ENCODE measurements at regions of chr10 and their contacts with region 1.

Region 1: GRCh38 chr10:124524969-124525653 is 63.5 kb downstream of the LHPP start:
- DNase-seq: no peak
- ATAC-seq: no peak
- H3K4me3 ChIP-seq: no peak overlapping the region
- H3K4me3 Mint-ChIP-seq: no peak overlapping the region
- H3K27ac ChIP-seq: no peak overlapping the region
- H3K27ac Mint-ChIP-seq: no peak overlapping the region
- H3K4me1 ChIP-seq: peaks cover 19% of the 10 kb centered on the region
- H3K4me1 Mint-ChIP-seq: peaks cover under 1 to 2% of the 10 kb centered on the region in 2 donors
- H3K27me3 ChIP-seq: no peaks in the 10 kb centered on the region
- H3K27me3 Mint-ChIP-seq: peaks cover 0 to under 1% of the 10 kb centered on the region in 2 donors
- CTCF ChIP-seq: no peak

Region 2: GRCh38 chr10:125187271-125188194 is 662.4 kb after region 1 on chr10:
- intact Hi-C with region 1: loop called (anchors 5 kb)
- DNase-seq: no peak
- ATAC-seq: no peak
- H3K4me3 ChIP-seq: no peak overlapping the region
- H3K4me3 Mint-ChIP-seq: no peak overlapping the region
- H3K27ac ChIP-seq: no peak overlapping the region
- H3K27ac Mint-ChIP-seq: no peak overlapping the region
- H3K4me1 ChIP-seq: no peaks in the 10 kb centered on the region
- H3K4me1 Mint-ChIP-seq: no peaks in the 10 kb centered on the region
- H3K27me3 ChIP-seq: no peaks in the 10 kb centered on the region
- H3K27me3 Mint-ChIP-seq: peaks cover 19 to 29% of the 10 kb centered on the region in 2 donors
- CTCF ChIP-seq: no peak

Measured in natural killer cell (primary cell).